ENCODE measurements at regions of chr9 and their contacts with region 1.

Region 1: GRCh38 chr9:88388172-88388885 is at the start of gene SPIN1:
- DNase-seq: peak; percentile 80
- H3K4me3 Mint-ChIP-seq: peak within 1 kb of the TSS; percentile 96
- H3K27ac Mint-ChIP-seq: peak within 1 kb of the TSS; percentile 97
- H3K4me1 Mint-ChIP-seq: peaks cover 41% of the 10 kb centered on the region
- H3K27me3 Mint-ChIP-seq: peaks cover 4% of the 10 kb centered on the region
- total RNA-seq, gene SPIN1: 39.1 and 41.8 TPM in 2 replicates

Region 2: GRCh38 chr9:87725900-87726709 is 662.2 kb before region 1 on chr9 and contains the start of gene CTSL:
- intact Hi-C with region 1: no loop called
- DNase-seq: peak; percentile 13
- H3K4me3 Mint-ChIP-seq: peak within 1 kb of the TSS; percentile 80
- H3K27ac Mint-ChIP-seq: no peak within 1 kb of the TSS
- H3K4me1 Mint-ChIP-seq: no peaks in the 10 kb centered on the region
- H3K27me3 Mint-ChIP-seq: peaks cover 39% of the 10 kb centered on the region
- total RNA-seq, gene CTSL: 1.5 and 2.5 TPM in 2 replicates

Region 3: DNA sequence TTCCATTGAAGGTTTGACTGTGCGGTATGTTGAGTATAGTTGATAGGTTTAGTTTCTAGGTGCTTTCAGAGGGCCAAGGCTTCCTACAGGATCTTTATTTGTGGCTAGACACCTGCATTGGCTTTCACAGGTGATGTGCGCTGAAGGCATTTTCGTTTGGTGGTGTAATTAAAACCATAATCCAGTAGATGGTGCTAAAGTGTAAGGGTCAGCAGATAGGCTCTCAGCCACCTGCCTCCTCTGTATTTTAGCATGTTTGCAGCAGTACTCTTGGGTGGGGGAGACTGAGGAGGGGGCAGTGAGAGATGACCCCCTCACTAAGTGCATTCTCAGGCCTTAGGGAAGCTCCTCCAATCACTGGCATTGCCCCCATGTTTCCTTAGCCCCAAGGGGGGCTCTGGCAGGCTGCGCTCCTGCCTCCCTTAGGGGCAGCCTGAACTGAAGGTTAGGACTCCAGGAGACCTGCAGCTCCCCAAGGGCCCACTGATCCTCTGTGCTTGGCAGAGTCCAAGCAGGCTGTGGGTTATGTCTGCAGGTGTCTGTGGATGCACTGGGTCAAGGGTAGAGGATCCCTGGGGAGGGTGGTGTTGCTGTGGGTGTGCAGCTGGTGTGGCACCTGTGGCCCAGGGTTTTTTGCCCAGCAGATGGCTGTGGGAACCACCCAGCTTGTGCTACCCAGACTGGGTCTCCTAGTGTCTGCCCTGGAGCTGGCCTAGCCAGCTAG is 437.4 kb before region 1 on chr9:
- intact Hi-C with region 1: loop called (anchors 2 kb)
- DNase-seq: no peak
- H3K4me3 Mint-ChIP-seq: no peak overlapping the region
- H3K27ac Mint-ChIP-seq: no peak overlapping the region
- H3K4me1 Mint-ChIP-seq: no peaks in the 10 kb centered on the region
- H3K27me3 Mint-ChIP-seq: peaks cover 18% of the 10 kb centered on the region

Region 4: DNA sequence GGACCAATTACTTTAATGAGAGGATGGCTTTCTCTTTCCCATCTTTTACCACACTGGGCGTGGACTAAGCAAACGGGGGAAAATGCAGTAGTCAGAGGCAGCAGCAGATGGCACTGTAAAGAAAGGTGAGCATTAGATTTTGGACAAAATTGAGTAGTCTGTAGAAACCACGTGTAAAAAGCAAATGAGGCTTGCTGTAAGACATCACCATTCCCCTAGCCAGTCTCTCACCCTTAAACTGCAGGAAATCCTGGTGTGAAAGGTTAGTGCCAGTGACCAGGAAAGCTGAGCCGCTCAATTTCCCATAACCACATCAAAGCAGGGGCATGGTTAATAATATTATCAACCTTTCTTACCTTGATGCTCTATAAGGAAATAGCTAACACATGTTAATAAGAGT is 281.8 kb before region 1 on chr9:
- intact Hi-C with region 1: loop called (anchors 1 kb)
- DNase-seq: peak; percentile 7
- H3K4me3 Mint-ChIP-seq: no peak overlapping the region
- H3K27ac Mint-ChIP-seq: no peak overlapping the region
- H3K4me1 Mint-ChIP-seq: no peaks in the 10 kb centered on the region
- H3K27me3 Mint-ChIP-seq: peaks cover 9% of the 10 kb centered on the region

Region 5: DNA sequence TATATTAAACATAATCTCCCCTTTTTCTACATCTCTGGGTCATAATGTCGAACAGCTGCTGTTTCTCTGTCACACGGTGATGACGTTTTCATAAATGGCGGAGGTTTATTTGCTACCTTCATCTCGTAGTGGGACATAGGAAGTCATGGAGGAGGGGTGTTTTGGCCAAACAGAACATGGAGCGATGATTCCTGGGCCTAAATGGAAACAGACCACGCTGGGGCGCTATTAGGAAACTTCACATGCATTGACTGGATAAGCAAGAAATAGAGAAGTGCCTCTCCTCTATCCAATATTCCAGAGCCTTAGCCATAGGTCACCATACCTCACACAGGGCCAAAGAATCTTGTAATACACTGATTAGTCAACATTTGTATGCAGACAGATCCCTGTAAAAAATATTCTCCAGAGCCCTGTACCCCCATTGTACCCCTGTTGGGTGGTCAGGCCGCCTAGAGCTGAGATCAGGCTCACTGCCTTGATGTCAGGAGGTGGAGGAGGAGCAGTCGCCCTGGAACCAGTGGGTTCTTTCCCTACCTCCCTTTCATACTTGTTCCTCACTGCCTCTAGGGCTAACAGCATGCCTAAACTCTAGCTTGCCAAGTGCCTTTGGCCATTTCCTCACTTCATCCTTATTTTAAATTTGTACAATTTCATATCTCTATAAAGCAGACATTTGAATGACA is 77.9 kb before region 1 on chr9:
- intact Hi-C with region 1: loop called (anchors 1 kb)
- DNase-seq: no peak
- H3K4me3 Mint-ChIP-seq: no peak overlapping the region
- H3K27ac Mint-ChIP-seq: peak overlapping the region; percentile 48
- H3K4me1 Mint-ChIP-seq: peaks cover 70% of the 10 kb centered on the region
- H3K27me3 Mint-ChIP-seq: peaks cover 1% of the 10 kb centered on the region

Region 6: DNA sequence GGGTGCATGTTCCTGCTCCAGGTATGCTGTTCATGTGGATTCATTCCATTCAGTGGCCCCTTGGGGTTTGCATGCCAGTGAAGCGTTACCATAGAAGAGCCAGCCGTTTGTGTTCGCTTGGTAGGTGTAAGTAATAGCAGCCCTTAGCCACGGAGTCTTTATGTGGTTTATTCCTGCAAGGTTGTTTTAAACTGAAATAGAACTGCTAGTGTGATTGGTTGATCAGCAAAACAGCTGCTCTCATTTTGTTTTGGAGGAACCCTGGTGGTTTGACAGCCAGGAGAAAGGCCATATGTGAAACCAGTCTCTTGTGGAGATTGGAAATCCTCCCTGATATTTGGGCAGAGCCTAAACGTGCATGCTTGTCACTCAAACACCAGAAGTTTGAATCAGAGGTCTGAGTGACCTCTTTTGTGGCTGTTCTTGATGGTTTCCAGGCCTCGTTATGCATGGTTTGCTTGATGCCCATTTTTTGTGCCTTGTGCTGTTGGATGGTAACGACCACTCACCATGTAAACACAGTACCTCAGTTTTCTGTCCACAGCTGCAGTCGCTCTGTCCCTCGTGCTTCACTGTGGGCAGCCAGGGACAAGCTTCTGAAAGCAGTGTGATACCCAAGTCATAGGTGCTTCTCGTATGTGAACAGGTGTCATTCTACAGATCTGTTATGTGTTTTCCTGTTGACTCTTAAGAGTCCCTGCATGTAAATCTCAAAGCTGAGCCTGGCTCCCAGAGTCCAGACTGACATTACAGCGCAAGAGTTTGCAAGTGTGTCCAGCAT is 88.4 kb after region 1 on chr9:
- intact Hi-C with region 1: loop called (anchors 1 kb)
- DNase-seq: no peak
- H3K4me3 Mint-ChIP-seq: no peak overlapping the region
- H3K27ac Mint-ChIP-seq: peak overlapping the region; percentile 69
- H3K4me1 Mint-ChIP-seq: peaks cover 25% of the 10 kb centered on the region
- H3K27me3 Mint-ChIP-seq: no peaks in the 10 kb centered on the region

Region 7: DNA sequence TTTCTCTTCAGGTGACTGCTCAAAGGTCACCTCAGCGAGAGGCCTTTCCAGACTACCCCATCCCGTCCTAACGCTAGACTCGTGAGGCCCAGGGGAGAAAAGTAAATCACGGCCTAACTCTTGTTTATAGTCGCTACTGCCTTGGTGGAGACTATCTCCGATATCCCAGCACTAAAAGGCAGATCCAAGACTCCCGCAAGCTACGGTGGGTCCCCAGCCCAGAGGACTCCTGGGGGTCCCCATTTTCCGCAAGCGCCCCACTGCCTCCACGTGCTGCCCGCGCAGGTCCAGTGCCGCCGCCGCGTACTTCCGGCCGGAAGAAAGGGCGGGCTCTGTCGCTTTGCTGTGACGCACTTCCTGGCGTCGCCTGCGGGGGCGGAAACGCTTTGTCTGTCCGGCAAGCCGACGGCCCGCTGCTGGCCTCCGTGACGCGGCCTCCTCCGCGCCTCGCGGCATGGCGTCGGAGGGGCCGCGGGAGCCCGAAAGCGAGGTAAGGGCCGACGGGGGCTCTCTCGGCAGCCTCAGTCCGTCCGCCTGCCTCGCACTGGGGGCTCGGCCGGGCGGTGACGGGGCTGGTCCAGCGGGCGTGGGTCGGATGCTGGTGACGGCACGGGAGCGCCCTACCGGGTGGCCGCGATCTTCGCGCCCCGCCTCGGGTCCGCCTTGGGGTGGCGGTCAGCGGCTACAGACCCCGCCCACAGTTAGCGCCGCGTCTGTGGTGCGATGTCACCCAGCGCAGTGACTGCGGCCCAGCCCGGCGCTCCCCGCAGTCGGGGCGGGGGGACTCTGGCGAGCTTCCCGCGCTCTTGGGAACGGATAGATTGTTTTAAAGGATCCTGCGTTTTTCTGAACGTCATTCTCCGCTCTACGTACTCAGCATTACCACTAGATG is 930.0 kb after region 1 on chr9 and contains the start of gene SECISBP2:
- intact Hi-C with region 1: loop called (anchors 10 kb)
- DNase-seq: peak; percentile 93
- H3K4me3 Mint-ChIP-seq: peak within 1 kb of the TSS; percentile 90
- H3K27ac Mint-ChIP-seq: peak within 1 kb of the TSS; percentile 95
- H3K4me1 Mint-ChIP-seq: peaks cover 72% of the 10 kb centered on the region
- H3K27me3 Mint-ChIP-seq: no peaks in the 10 kb centered on the region
- total RNA-seq, gene SECISBP2: 49.4 and 54.9 TPM in 2 replicates